ENCODE measurements at regions of chr16 and their contacts with region 1.

Region 1: DNA sequence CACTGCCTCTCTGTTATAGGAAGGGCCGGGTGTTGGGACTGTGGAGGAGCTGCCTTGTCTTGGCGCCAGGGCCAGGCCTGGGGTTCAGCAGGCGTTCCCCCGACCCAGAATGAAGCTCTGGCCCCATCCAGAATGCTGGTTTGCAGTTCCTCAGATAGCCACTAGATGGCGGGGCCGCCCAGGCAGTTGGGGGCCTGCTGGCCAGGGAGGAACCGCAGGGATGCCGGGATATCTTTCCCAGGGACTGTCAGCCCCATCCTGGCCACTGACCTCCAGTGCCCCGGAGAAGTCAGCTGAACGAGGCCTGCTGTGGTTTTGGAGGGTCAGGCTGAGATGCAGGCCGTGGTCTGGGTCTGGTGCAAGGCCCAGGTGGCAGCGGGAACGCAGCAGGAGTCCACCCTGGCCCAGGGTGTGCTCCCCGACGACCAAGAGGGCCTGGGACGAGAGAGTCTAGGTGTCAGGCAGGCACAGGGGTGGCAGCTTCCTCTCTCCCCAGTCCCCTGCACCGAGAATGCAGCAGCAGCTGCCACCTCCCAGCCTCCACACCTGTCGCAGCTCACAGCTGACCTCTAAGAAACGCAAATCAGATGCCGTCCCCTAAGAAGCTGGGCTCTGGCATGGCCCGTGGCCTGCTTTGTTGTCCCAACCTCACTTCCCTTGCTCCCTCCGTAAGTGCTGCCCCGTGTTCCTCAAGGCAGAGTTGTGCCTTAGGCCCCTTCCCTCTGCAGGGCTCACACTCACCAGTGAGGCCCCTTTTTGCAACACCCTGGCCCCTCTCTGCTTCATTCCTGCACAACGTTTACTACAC is 51.2 kb downstream of the RMI2 start:
- DNase-seq: peak; percentile 88
- H3K4me3 Mint-ChIP-seq: no peak overlapping the region
- H3K27ac Mint-ChIP-seq: no peak overlapping the region
- H3K4me1 Mint-ChIP-seq: peaks cover 9% of the 10 kb centered on the region
- H3K27me3 Mint-ChIP-seq: peaks cover 17% of the 10 kb centered on the region
- CTCF ChIP-seq: peak; percentile 99

Region 2: DNA sequence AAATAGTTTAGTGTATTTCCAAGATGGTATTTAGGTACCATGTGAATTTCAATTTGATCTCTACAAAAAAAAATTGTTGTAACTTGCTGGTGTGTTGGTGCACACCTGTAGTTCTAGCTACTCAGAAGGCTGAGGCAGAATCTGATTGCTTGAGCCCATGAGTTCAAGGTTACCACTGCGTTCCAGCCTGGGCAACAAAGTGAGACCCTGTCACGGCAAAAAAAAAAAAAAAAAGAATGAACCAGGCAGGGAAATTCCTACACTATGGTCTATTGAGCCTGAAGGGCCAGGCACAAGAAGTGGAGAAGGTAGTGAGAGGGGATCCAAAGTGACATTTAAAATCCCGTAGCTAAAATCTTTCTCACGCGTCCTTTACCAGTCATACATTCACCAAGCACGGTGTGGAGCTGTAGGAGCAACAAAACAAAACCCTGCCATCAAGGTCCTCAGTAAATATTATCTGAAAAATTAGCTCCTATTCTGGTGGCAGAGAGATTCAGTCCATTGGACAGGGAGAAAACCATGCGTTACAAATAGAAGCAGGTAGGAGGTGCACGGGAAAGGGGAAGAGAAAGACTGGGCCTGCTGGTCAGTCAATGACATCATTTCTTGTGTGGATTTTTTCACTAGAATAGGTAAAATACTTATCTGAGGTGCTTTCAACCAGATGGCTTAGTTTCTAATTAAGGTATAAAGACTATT is 319.0 kb after region 1 on chr16:
- CTCF ChIA-PET with region 1: interaction called, 8 read pairs
- intact Hi-C with region 1: loop called (anchors 1 kb)
- DNase-seq: no peak
- H3K4me3 Mint-ChIP-seq: no peak overlapping the region
- H3K27ac Mint-ChIP-seq: peak overlapping the region; percentile 28
- H3K4me1 Mint-ChIP-seq: peaks cover 38% of the 10 kb centered on the region
- H3K27me3 Mint-ChIP-seq: no peaks in the 10 kb centered on the region
- CTCF ChIP-seq: no peak